ENCODE measurements at regions of chr5 and their contacts with region 1.

Region 1: GRCh38 chr5:150129813-150130492 is 25.7 kb downstream of the PDGFRB start:
- DNase-seq: no peak

Region 2: GRCh38 chr5:150058480-150059126 is 71.3 kb before region 1 on chr5:
- intact Hi-C with region 1: no loop called
- DNase-seq: no peak

Region 3: GRCh38 chr5:150377964-150378694 is 248.2 kb after region 1 on chr5:
- intact Hi-C with region 1: no loop called
- DNase-seq: no peak

Region 4: GRCh38 chr5:150436141-150436680 is 306.3 kb after region 1 on chr5:
- intact Hi-C with region 1: loop called (anchors 5 kb)
- DNase-seq: peak; percentile 92